ENCODE measurements at regions of chr18 and their contacts with region 1.

Region 1: DNA sequence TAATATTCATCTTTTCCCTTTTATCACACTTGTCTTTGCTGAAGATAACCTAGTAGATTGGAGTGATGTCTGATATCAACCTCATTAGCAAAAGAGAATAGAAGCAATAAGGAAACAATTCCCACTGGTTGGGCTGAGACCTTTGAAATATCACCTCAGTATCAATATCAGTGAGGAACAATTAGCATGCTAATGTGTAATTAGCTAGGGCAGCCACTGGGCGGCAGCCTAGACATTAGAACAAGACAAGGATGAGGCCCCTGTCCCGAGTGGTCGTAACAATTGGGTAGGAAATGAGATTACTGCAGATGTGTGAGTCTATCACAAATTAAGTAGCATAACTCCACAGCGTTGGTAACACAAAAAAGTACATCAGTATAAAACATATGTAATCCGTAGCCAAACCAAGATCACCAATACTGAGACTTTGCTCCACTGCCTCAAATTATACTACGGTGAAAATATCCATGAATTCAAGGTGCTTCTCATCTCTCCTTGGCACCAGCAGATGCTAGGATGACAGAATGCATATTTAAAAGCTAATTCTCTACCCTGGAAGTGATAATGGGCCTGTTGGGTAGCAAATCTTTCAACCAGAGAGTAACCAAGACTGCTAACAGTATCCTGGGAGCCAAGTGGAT is 99.1 kb downstream of the ALPK2 start:
- DNase-seq: peak; percentile 68
- ATAC-seq: peak; percentile 82
- H3K4me3 ChIP-seq: no peak overlapping the region
- H3K27ac ChIP-seq: no peak overlapping the region
- H3K4me1 ChIP-seq: no peaks in the 10 kb centered on the region; the same call in 1 of the 2 replicates
- H3K27me3 ChIP-seq: no peaks in the 10 kb centered on the region
- CTCF ChIP-seq: peak; percentile 84
- POLR2A ChIP-seq: no peak; the same call in 1 of the 2 replicates
- RAD21 ChIP-seq: peak; percentile 90

Region 2: DNA sequence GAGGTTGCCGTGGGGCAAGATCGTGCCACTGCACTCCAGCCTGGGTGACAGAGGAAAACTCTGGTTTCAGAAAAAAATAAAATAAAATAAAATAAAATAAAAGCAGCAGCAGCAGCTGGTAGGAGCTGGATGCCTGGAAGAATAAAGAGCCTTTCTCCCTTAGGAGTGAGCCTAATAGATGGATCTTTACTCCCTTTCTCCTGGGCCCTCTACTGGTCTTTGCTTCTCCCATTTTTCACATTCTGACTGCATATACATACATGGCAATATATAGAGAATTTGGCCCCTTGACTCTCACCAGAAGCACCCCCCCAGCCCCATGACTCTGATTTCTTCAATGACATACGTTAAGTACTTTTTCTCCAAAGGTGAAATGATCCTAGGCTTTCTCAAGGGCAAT is 131.6 kb after region 1 on chr18:
- CTCF ChIA-PET with region 1: no interaction called
- POLR2A ChIA-PET with region 1: no interaction called
- dilution Hi-C with region 1: no loop called
- in situ Hi-C with region 1: no loop called
- intact Hi-C with region 1: loop called (anchors 1 kb)
- DNase-seq: peak; percentile 38
- ATAC-seq: peak; percentile 71
- H3K4me3 ChIP-seq: no peak overlapping the region
- H3K27ac ChIP-seq: no peak overlapping the region
- H3K4me1 ChIP-seq: peaks cover 2% of the 10 kb centered on the region; the same call in 1 of the 2 replicates
- H3K27me3 ChIP-seq: no peaks in the 10 kb centered on the region
- CTCF ChIP-seq: peak; percentile 42
- POLR2A ChIP-seq: no peak
- RAD21 ChIP-seq: peak; percentile 46

Region 3: DNA sequence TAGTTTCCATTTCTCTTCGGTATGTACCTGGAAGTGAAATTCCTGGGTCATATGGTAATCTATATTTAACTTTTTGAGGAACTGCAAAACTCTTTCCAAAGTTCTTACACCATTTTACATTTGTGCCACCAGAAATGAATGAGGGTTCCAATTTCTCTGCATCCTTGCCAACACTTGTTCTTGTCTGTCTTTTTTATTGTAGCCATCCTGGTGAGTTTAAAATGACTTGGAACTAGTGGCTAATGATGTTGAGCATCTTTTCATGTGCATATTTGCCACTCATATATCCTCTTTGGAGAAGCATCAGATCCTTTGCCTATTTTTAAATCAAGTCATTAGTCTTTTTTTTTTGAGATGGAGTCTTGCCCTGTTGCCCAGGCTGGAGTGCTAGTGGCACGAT is 200.8 kb after region 1 on chr18:
- CTCF ChIA-PET with region 1: no interaction called
- POLR2A ChIA-PET with region 1: no interaction called
- dilution Hi-C with region 1: no loop called
- in situ Hi-C with region 1: loop called (anchors 10 kb)
- intact Hi-C with region 1: no loop called
- DNase-seq: no peak
- ATAC-seq: no peak
- H3K4me3 ChIP-seq: no peak overlapping the region
- H3K27ac ChIP-seq: no peak overlapping the region
- H3K4me1 ChIP-seq: no peaks in the 10 kb centered on the region
- H3K27me3 ChIP-seq: no peaks in the 10 kb centered on the region
- CTCF ChIP-seq: no peak
- POLR2A ChIP-seq: no peak
- RAD21 ChIP-seq: no peak

Region 4: GRCh38 chr18:58768293-58768974 is 238.6 kb after region 1 on chr18:
- CTCF ChIA-PET with region 1: interaction called, 32 read pairs
- POLR2A ChIA-PET with region 1: no interaction called
- dilution Hi-C with region 1: no loop called
- in situ Hi-C with region 1: loop called (anchors 5 kb)
- intact Hi-C with region 1: loop called (anchors 1 kb)
- DNase-seq: peak; percentile 48
- ATAC-seq: peak; percentile 92
- H3K4me3 ChIP-seq: 0 out of 2 replicates have a peak overlapping the region, but pooled peaks have one; percentile 20
- H3K27ac ChIP-seq: no peak overlapping the region
- H3K4me1 ChIP-seq: peaks cover 4% of the 10 kb centered on the region; the same call in 1 of the 2 replicates
- H3K27me3 ChIP-seq: peaks cover 28% of the 10 kb centered on the region
- CTCF ChIP-seq: peak; percentile 79
- POLR2A ChIP-seq: no peak
- RAD21 ChIP-seq: peak; percentile 87

Measured in IMR-90 (cell line).